ENCODE measurements at regions of chr14 and their contacts with region 1.

Region 1: DNA sequence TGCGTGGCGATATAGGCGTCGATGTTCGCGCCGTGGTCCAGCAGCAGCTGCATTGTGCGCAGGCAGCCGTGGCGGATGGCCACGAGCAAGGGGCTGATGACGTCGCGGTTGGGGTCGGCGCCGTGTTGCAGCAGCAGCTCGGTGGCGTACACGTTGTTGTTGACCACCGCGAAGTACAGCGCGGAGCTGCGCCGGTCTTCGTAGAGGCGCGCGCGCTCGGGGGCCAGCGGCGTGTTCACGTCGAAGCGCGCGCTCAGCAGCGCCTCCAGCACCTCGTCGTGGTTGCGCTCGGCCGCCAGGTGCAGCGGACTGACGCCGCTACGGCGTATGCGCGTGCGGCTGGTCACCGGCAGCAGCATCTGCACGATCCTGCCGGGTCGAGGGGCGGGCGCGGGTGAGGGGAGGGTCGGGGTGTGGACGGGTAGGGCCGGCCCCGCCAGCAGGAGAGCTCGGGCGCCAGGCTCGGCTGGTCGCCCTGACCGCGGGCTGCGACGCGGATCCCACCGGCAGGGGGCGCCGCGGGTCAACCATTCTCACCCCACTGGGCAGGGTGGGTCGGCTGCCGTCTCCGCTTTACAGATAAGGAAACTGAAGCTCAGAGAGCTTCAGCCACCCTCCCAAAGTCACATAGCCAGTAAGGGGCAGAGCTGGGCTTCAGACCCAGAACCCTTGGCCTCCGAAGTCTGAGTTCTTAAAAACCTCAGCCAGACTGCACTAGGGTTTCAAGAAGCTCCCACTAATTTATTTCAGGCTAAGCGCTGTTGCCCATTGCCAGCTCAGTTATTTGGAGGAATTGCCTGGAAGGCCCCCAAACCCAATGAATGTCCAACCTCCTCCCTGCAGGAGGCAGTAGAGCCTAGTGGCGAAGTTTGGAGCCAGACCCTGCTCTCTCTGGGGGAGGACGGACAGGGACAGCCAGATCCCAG is 12.4 kb downstream of the FAM181A start:
- DNase-seq: peak; percentile 96
- H3K4me3 ChIP-seq: peak overlapping the region; percentile 39 to 51
- H3K27ac ChIP-seq: no peak overlapping the region
- H3K4me1 ChIP-seq: peaks cover 9 to 18% of the 10 kb centered on the region in 2 experiments; a peak in 3 of 4 replicates
- H3K27me3 ChIP-seq: peaks cover 39% of the 10 kb centered on the region
- CTCF ChIP-seq: peak; percentile 77
- EP300 ChIP-seq: no peak
- RAD21 ChIP-seq: peak; percentile 83

Region 2: DNA sequence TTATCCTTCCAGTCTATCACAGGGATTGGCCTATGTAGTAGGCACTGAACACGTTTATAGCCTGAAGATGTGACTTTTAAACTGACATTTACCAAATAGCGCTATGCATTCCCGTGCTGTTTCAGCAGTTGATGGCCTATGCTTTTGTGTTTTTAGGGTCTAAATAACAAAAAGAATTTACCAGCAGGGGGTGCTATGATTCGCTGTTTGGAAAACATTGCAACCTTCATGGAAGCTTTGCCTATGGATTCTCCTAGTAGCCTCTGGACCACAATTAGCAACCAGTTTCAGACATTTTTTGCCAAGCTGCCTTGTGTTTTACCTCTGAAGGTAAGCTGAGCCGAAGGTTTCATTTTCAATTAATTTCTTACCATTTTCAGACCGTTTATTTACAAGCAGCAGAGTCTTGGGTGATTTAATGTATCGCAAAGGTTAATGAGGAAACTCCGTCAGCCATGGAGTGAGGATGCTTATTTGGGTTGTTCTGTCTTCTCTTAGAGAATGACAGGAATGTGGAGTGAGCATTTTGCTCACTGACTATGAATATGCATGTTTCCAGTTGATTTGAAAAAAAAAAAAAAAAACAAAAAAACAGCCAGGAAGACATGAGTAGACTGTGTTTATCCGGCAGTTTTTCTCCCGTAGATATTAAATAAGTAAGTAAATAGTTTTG is 284.4 kb before region 1 on chr14:
- CTCF ChIA-PET with region 1: interaction called, 75 read pairs
- POLR2A ChIA-PET with region 1: no interaction called
- DNase-seq: peak; percentile 56
- H3K4me3 ChIP-seq: peak overlapping the region in 1 of 2 experiments; percentile 44; a peak in 1 of 4 replicates
- H3K27ac ChIP-seq: no peak overlapping the region
- H3K4me1 ChIP-seq: no peaks in the 10 kb centered on the region; a peak in 1 of 4 replicates
- H3K27me3 ChIP-seq: no peaks in the 10 kb centered on the region
- CTCF ChIP-seq: peak; percentile 47
- EP300 ChIP-seq: no peak
- RAD21 ChIP-seq: peak; percentile 90

Region 3: DNA sequence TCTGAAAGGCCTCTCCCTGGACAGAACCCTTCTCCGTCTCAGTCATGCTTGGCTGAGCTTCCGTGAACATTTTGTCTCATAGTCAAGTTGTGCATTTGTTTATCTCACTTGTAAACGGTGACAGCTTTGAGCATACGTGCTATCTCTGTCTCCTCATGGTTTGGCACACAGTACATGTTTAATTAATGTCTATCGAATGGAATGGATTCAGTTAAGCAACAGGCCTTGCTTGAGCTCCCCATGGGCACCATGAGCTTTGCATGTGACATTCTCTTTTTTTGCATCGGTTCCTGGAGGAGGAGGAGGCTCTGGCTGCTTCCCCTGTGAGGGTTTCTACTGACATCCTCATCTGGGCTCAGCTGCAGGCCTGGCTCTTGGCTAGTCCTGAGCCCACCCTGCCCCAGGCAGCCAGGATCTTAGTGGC is 231.2 kb before region 1 on chr14:
- CTCF ChIA-PET with region 1: no interaction called
- POLR2A ChIA-PET with region 1: no interaction called
- DNase-seq: no peak
- H3K4me3 ChIP-seq: no peak overlapping the region
- H3K27ac ChIP-seq: no peak overlapping the region
- H3K4me1 ChIP-seq: peaks cover 0 to 3% of the 10 kb centered on the region in 2 experiments; a peak in 1 of 4 replicates
- H3K27me3 ChIP-seq: no peaks in the 10 kb centered on the region
- CTCF ChIP-seq: no peak
- EP300 ChIP-seq: no peak
- RAD21 ChIP-seq: no peak

Region 4: GRCh38 chr14:93923626-93924025 is 15.9 kb before region 1 on chr14:
- CTCF ChIA-PET with region 1: interaction called, 19 read pairs
- POLR2A ChIA-PET with region 1: no interaction called
- DNase-seq: no peak
- H3K4me3 ChIP-seq: no peak overlapping the region
- H3K27ac ChIP-seq: no peak overlapping the region
- H3K4me1 ChIP-seq: no peaks in the 10 kb centered on the region
- H3K27me3 ChIP-seq: no peaks in the 10 kb centered on the region
- CTCF ChIP-seq: no peak
- EP300 ChIP-seq: no peak
- RAD21 ChIP-seq: no peak

Region 5: DNA sequence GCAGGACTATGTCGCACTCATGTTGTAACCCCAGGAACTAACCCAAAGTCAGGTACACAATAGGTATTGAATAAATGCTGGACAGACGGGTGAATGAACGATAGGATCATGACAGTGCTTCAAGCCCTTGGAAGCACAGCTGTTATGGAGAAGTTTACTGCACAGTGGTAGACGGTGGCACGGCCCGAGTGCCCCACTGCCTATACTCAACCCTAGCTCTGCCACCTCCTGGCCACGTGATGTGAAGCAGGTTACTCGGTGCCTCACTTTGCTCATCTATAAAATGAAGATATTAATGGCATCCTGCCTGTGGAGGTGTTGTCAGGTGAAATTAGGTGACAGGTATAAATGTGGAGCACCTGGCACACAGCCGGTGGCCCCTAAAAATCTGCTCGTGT is 31.0 kb after region 1 on chr14:
- CTCF ChIA-PET with region 1: interaction called, 69 read pairs
- POLR2A ChIA-PET with region 1: no interaction called
- DNase-seq: peak; percentile 56
- H3K4me3 ChIP-seq: no peak overlapping the region; a peak in 1 of 4 replicates
- H3K27ac ChIP-seq: no peak overlapping the region
- H3K4me1 ChIP-seq: peaks cover 3 to 5% of the 10 kb centered on the region in 2 experiments; a peak in 2 of 4 replicates
- H3K27me3 ChIP-seq: no peaks in the 10 kb centered on the region
- CTCF ChIP-seq: peak; percentile 46
- EP300 ChIP-seq: no peak
- RAD21 ChIP-seq: peak; percentile 54

Region 6: DNA sequence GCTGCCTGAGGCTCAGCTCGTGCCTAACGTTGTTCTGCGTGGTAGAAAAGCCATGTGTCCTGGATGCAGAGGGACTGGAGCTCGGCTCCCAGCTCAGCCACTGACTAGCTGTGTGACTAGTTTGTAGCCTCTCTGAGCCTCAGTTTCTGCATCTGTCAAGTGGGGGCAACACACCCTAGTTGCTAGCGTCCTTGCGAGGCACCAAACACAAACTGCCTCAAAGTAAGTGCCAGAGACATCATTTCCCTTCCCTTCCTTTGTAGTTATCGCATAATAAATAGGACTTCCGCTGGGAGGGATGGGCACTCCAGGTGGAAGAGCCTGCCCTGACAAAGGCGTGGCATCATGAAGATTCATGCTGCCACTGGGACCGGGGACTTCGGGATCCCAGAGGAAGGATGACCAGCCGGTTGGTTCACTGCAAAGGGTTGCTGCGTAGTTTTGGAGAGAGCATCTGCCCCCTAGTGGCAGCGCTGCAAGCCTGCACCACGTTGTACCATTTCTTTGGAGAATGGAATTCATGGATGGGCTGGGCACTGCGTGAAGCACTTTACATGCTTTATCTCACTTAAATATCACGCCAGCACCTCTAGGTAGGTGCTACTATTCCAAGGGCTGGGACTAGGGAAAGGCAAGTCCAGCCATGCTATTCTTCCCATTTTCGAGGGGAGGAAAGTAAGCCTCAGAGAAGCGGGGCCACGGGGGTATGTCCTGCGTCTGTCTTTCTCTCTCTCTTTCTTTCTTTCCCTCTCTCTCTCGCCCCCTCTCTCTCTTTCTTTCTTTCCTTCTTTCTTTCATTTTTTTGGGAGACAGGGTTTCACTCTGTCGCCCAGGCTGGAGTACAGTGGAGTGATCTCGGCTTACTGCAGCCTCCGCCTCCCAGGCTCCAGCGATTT is 62.2 kb after region 1 on chr14:
- CTCF ChIA-PET with region 1: interaction called, 219 read pairs
- POLR2A ChIA-PET with region 1: interaction called, 4 read pairs
- DNase-seq: peak; percentile 86
- H3K4me3 ChIP-seq: peak overlapping the region in 1 of 2 experiments; percentile 22; a peak in 1 of 4 replicates
- H3K27ac ChIP-seq: no peak overlapping the region
- H3K4me1 ChIP-seq: peaks cover 0 to 5% of the 10 kb centered on the region in 2 experiments; a peak in 1 of 4 replicates
- H3K27me3 ChIP-seq: no peaks in the 10 kb centered on the region
- CTCF ChIP-seq: peak; percentile 94
- EP300 ChIP-seq: no peak
- RAD21 ChIP-seq: peak; percentile 82

Region 7: GRCh38 chr14:94036313-94037050 is 96.9 kb after region 1 on chr14:
- CTCF ChIA-PET with region 1: interaction called, 12 read pairs
- POLR2A ChIA-PET with region 1: no interaction called
- DNase-seq: peak; percentile 80
- H3K4me3 ChIP-seq: no peak overlapping the region
- H3K27ac ChIP-seq: no peak overlapping the region
- H3K4me1 ChIP-seq: peaks cover 0 to 14% of the 10 kb centered on the region in 2 experiments; a peak in 1 of 4 replicates
- H3K27me3 ChIP-seq: no peaks in the 10 kb centered on the region
- CTCF ChIP-seq: peak; percentile 78
- EP300 ChIP-seq: no peak
- RAD21 ChIP-seq: peak; percentile 74

Region 8: DNA sequence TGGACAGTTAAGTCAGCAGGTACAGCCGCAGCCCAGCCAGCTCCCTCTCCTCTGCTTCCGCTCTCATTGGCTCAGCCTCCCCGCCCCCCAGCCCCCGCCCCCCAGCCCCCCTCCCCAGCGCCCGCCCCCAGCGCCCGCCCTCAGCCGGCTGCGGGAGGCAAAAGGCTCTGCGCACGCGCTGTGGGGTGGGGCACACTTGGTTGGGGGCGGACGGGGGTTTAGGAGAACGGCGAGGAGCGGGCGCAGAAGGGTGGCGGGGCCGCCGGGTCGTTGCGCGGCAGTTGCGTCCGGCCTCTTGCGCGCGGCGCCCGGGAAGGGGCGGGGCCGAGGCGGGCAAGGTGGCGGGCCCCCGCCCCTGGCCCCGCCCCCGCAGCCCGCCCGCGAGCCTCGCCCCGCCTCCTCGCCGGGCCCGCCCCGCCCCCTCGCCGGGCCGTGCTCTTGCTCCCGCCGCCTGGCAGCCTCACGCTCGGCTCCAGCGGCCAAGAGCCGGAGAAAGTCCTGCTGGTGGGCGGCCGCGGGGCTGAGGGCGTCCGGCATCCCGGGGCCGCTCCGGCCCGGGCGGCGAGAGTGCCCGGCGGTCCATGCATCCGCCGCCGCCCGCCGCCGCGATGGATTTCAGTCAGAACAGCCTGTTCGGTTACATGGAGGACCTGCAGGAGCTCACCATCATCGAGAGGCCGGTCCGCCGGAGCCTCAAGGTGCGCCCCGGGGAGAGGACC is 234.5 kb after region 1 on chr14 and contains the start of gene PPP4R4:
- CTCF ChIA-PET with region 1: interaction called, 11 read pairs
- POLR2A ChIA-PET with region 1: no interaction called
- DNase-seq: peak; percentile 97
- H3K4me3 ChIP-seq: peak within 1 kb of the TSS; percentile 75 to 81
- H3K27ac ChIP-seq: peak within 1 kb of the TSS; percentile 2 to 75; a peak in 3 of 4 replicates
- H3K4me1 ChIP-seq: peaks cover 9 to 11% of the 10 kb centered on the region in 2 experiments; a peak in 2 of 4 replicates
- H3K27me3 ChIP-seq: no peaks in the 10 kb centered on the region
- CTCF ChIP-seq: no peak
- EP300 ChIP-seq: no peak
- RAD21 ChIP-seq: no peak
- polyA plus RNA-seq, gene PPP4R4: 2.5 and 3.5 TPM in 2 replicates